ENCODE measurements at regions of chr17 and their contacts with region 1.

Region 1: GRCh38 chr17:33560165-33560564 is 267.1 kb upstream of the ASIC2 start:
- DNase-seq: no peak
- H3K4me3 ChIP-seq: no peak overlapping the region
- CTCF ChIP-seq: no peak

Region 2: GRCh38 chr17:33528846-33529245 is 31.3 kb before region 1 on chr17:
- in situ Hi-C with region 1: loop called (anchors 5 kb)
- DNase-seq: no peak
- H3K4me3 ChIP-seq: no peak overlapping the region
- CTCF ChIP-seq: no peak

Region 3: DNA sequence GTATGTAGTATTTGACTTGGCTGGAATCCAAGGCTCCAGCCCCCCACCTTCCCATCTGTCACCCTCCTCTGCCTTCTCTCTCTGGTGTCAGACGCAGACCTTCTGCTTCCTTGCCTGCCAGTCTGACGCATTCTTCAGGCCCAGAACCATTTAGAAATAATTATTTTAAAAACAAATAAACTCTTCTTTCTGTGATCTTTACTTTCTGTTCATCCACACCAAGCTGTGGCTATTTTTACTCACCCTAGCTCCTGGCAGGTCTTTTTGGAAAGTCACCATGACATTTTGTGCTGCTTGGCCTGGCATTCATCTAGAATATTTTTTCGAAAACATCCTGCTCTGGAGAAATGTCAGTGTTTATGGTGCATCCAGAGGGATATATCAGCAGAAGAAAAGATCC is 63.7 kb after region 1 on chr17:
- in situ Hi-C with region 1: loop called (anchors 5 kb)
- DNase-seq: no peak
- H3K4me3 ChIP-seq: no peak overlapping the region
- CTCF ChIP-seq: no peak

Measured in astrocyte of the cerebellum (primary cell).